Head of caudate nucleus (tissue), 42 donors: ENCODE measurements at regions of chr14 and their contacts with region 1.

Region 1: GRCh38 chr14:44912041-44912869 is 49.5 kb downstream of the KLHL28 start:
- DNase-seq: peak in 2 of 42 donors; percentile 6

Region 2: GRCh38 chr14:45267071-45267470 is 354.8 kb after region 1 on chr14:
- intact Hi-C with region 1: loop called (anchors 10 kb)
- DNase-seq: no peak